AG04450 (cell line): ENCODE measurements at regions of chr3 and their contacts with region 1.

Region 1: GRCh38 chr3:58305882-58306711 is at the starts of genes HTD2 and RPP14:
- DNase-seq: peak; percentile 93
- H3K4me3 ChIP-seq: peak within 1 kb of the TSS; percentile 89
- H3K27ac ChIP-seq: peak within 1 kb of the TSS; percentile 98
- H3K27me3 ChIP-seq: peaks cover 4% of the 10 kb centered on the region
- CTCF ChIP-seq: peak; percentile 98
- polyA plus RNA-seq, gene HTD2: 7.1 and 9.6 TPM in 2 replicates
- polyA plus RNA-seq, gene RPP14: 14.7 and 18.5 TPM in 2 replicates

Region 2: GRCh38 chr3:58093573-58094195 is 212.4 kb before region 1 on chr3:
- CTCF ChIA-PET with region 1: no interaction called
- POLR2A ChIA-PET with region 1: no interaction called
- DNase-seq: no peak
- H3K4me3 ChIP-seq: no peak overlapping the region
- H3K27ac ChIP-seq: no peak overlapping the region
- H3K27me3 ChIP-seq: no peaks in the 10 kb centered on the region
- CTCF ChIP-seq: no peak

Region 3: GRCh38 chr3:58167431-58168351 is 138.4 kb before region 1 on chr3:
- CTCF ChIA-PET with region 1: interaction called, 18 read pairs
- POLR2A ChIA-PET with region 1: interaction called, 4 read pairs
- DNase-seq: peak; percentile 37
- H3K4me3 ChIP-seq: no peak overlapping the region
- H3K27ac ChIP-seq: no peak overlapping the region
- H3K27me3 ChIP-seq: no peaks in the 10 kb centered on the region
- CTCF ChIP-seq: peak; percentile 98

Region 4: GRCh38 chr3:58188173-58188564 is 117.9 kb before region 1 on chr3:
- CTCF ChIA-PET with region 1: interaction called, 216 read pairs
- POLR2A ChIA-PET with region 1: interaction called, 3 read pairs
- DNase-seq: no peak
- H3K4me3 ChIP-seq: no peak overlapping the region
- H3K27ac ChIP-seq: no peak overlapping the region
- H3K27me3 ChIP-seq: peaks cover 2% of the 10 kb centered on the region
- CTCF ChIP-seq: no peak

Region 5: GRCh38 chr3:58271901-58272501 is 34.1 kb before region 1 on chr3:
- CTCF ChIA-PET with region 1: interaction called, 24 read pairs
- POLR2A ChIA-PET with region 1: no interaction called
- DNase-seq: peak; percentile 71
- H3K4me3 ChIP-seq: no peak overlapping the region
- H3K27ac ChIP-seq: no peak overlapping the region
- H3K27me3 ChIP-seq: no peaks in the 10 kb centered on the region
- CTCF ChIP-seq: no peak

Region 6: DNA sequence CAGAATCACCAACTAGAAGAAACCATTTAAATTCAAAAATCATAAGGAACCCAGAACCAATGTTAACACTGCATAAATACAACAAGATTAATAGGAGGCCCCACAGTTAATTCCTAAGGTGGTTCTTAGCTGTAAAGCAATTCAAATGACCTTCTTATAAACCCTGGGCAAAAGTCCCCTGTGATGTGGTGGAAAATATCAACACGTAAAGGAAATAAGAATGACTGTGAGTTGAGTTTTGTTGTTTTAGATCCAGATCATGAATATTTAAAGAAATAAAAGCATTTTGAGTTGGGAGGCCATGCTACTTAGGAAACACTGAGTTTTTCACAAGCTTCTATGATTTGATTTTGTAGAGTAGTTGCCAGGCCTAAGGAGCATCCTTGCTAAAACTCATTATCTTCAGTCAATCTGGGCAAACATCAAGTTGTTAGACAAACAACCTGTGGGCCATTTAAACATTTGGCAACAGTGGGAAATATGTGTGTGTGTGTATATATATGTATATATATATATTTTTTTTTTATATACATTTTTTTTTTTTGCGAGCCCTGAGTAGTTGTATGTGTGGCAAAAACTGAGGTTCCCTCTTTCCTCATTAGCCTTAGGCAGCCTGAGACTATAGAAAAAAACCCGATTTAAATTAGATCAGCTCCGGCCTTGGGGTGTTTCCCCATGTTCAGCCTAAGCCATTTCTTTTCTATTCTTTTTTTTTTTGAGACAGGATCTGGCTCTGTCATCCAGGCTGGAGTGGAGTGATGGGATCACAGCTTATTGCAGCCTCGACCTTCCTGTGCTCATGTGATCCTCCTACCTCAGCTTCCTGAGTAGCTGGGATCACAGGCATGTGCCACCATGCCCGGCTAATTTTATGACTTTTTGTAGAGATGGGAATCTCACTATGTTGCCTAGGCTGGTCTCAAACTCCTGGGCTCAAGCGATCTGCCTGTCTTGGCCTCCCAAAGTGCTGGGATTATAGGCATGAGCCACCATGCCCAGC is 18.6 kb after region 1 on chr3:
- CTCF ChIA-PET with region 1: interaction called, 31 read pairs
- POLR2A ChIA-PET with region 1: interaction called, 4 read pairs
- DNase-seq: no peak
- H3K4me3 ChIP-seq: no peak overlapping the region
- H3K27ac ChIP-seq: no peak overlapping the region
- H3K27me3 ChIP-seq: no peaks in the 10 kb centered on the region
- CTCF ChIP-seq: no peak

Region 7: GRCh38 chr3:58349792-58350626 is 43.9 kb after region 1 on chr3:
- CTCF ChIA-PET with region 1: interaction called, 24 read pairs
- POLR2A ChIA-PET with region 1: no interaction called
- DNase-seq: no peak
- H3K4me3 ChIP-seq: no peak overlapping the region
- H3K27ac ChIP-seq: no peak overlapping the region
- H3K27me3 ChIP-seq: no peaks in the 10 kb centered on the region
- CTCF ChIP-seq: no peak

Region 8: DNA sequence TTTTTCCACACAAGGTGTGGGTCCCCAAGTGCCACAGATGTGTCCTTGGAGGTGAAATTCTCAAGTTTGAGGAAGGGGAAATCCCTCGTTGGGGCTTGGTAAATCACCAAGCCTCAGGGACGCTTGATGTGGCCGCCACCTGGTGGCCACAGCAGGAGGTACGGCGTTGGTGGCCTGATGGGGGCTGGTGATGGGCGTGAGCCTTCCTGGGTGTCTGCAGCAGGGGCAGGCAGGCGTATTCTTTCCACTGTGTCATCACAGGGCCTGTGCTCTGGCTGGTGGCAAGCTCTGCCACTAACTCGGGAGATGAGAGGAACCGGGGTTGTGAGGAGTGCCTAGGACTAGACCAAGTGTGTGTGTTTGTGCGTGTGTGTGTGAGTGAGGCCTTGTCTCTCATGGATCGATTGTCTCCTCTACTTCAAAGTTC is 226.7 kb after region 1 on chr3:
- CTCF ChIA-PET with region 1: interaction called, 24 read pairs
- POLR2A ChIA-PET with region 1: interaction called, 3 read pairs
- DNase-seq: peak; percentile 16
- H3K4me3 ChIP-seq: no peak overlapping the region
- H3K27ac ChIP-seq: no peak overlapping the region
- H3K27me3 ChIP-seq: no peaks in the 10 kb centered on the region
- CTCF ChIP-seq: peak; percentile 93